GM12878 (cell line): ENCODE measurements at regions of chr4 and their contacts with region 1.

Region 1: GRCh38 chr4:10018818-10019461 is 2.4 kb downstream of the SLC2A9 start:
- DNase-seq: peak; percentile 64
- ATAC-seq: peak; percentile 97
- H3K4me3 ChIP-seq: peak overlapping the region; percentile 47
- H3K27ac ChIP-seq: peak overlapping the region; percentile 3; the same call in 1 of the 2 replicates
- H3K4me1 ChIP-seq: peaks cover 14% of the 10 kb centered on the region
- H3K27me3 ChIP-seq: no peaks in the 10 kb centered on the region; a peak in 1 of 4 replicates
- CTCF ChIP-seq: peak; percentile 98 to 100 (median 99); a peak in 5 of 6 replicates
- EP300 ChIP-seq: no peak
- POLR2A ChIP-seq: peak; percentile 83
- RAD21 ChIP-seq: peak; percentile 86

Region 2: DNA sequence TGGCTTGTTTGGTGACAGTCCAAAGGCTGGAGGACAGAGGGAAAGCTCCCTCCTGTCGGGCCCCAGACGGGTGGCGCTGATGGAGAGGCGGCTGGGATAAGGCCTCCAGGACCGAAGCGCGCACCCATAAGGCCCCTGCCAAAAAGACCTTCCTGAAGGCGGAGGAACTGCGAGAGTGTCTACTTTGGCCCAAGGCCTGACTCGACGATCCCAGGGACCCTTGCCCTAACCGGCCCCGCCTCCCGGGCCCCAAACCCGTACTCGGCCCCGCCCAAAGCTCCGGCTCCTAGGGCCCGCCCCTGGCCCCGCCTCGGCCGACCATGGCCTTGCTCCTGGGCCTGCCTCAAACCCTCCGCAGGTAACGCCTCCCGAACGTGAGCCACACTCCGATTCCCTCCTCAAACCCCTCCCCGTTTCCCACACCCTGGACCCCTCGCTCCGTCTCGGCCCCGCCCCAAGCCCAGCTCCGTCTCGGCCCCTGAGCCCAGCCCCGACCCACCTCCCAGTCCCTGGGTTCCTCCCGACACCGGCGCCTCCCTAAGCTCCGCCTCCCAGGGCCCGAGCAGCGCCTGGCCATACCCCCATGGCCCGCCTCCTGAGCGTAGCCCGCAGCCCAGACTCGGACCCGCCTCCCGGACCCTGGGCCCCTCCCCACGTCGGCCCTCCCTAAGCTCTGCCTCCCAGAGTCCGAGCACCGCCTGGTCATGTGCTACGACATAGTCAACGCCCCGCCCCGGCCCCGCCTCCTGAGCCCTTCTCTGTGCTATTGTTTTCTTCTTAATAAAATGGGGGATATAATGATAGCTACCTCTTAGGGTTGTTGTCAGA is 327.5 kb before region 1 on chr4:
- CTCF ChIA-PET with region 1: interaction called, 9 read pairs
- POLR2A ChIA-PET with region 1: no interaction called
- RAD21 ChIA-PET with region 1: interaction called, 3 read pairs
- SMC1A ChIA-PET with region 1: no interaction called
- in situ Hi-C with region 1: loop called (anchors 10 kb)
- intact Hi-C with region 1: no loop called
- DNase-seq: peak; percentile 25
- ATAC-seq: peak; percentile 100
- H3K4me3 ChIP-seq: no peak overlapping the region
- H3K27ac ChIP-seq: no peak overlapping the region
- H3K4me1 ChIP-seq: no peaks in the 10 kb centered on the region
- H3K27me3 ChIP-seq: no peaks in the 10 kb centered on the region; a peak in 1 of 4 replicates
- CTCF ChIP-seq: no peak
- EP300 ChIP-seq: no peak
- POLR2A ChIP-seq: no peak
- RAD21 ChIP-seq: no peak

Region 3: DNA sequence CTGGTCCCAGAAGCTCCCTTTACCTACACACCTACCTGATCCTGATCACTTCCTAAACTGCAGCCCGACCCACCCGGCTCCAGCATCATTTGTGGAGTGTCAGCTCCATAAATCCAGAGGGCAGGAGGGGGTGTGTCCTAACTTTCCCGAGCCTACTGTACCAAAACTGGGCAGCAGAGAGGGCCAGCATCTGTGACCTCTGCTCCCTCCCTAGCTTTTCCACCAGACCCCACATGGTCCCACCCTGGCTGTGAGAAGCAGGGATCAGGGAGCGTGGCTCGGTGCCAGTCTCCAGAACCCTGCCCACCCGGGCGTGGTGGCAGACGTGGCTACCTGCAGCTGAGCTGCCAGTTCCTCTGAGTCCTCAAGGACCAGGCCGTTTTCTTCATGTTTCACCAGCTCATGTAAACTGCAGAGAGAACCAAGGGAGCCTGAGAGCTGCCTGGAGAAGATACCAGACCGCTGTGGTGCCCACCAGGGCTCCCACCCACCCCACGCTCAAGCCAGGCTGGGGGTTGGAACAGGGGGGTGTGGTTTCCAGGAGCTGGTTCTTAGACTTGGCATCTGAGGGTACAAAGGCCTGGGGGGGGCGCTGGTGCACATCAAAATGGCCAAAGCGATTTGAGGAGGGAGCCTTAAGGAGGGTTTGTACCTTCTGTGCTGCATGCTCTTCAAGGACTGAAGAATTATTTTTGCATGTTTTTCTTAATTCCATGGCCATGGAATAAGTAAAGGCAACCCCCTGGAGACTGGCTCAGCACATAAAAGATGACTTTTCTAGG is 314.2 kb before region 1 on chr4:
- CTCF ChIA-PET with region 1: interaction called, 114 read pairs
- POLR2A ChIA-PET with region 1: no interaction called
- RAD21 ChIA-PET with region 1: interaction called, 33 read pairs
- SMC1A ChIA-PET with region 1: interaction called, 27 read pairs
- in situ Hi-C with region 1: loop called (anchors 10 kb)
- intact Hi-C with region 1: loop called (anchors 1 kb)
- DNase-seq: no peak
- ATAC-seq: no peak
- H3K4me3 ChIP-seq: no peak overlapping the region
- H3K27ac ChIP-seq: no peak overlapping the region
- H3K4me1 ChIP-seq: no peaks in the 10 kb centered on the region
- H3K27me3 ChIP-seq: no peaks in the 10 kb centered on the region
- CTCF ChIP-seq: 0 out of 6 replicates have a peak, but pooled peaks of 1 of the 3 experiments have one; percentile 5
- EP300 ChIP-seq: no peak
- POLR2A ChIP-seq: no peak
- RAD21 ChIP-seq: no peak

Region 4: DNA sequence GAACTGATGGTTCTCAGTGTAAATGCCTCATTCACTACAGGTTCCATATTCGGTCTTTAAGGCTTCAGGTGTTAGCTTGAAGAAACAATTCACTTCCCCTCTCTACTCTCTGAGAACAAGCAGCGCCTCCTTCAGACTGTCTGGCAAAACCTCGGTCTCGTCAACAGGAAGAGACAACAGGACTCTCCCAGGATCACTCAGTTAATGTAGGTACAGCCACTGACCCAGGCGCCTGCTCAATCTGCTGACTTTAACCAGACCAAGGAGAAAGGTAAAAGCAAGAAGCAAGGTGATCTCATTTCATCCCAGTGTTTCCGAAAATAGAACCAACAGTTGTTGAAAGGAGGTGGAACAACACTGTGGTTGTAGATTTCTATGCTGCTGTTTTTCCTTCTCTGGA is 99.9 kb before region 1 on chr4:
- CTCF ChIA-PET with region 1: interaction called, 37 read pairs
- POLR2A ChIA-PET with region 1: interaction called, 3 read pairs
- RAD21 ChIA-PET with region 1: interaction called, 22 read pairs
- SMC1A ChIA-PET with region 1: interaction called, 18 read pairs
- in situ Hi-C with region 1: no loop called
- intact Hi-C with region 1: loop called (anchors 5 kb)
- DNase-seq: no peak
- ATAC-seq: no peak
- H3K4me3 ChIP-seq: no peak overlapping the region
- H3K27ac ChIP-seq: no peak overlapping the region
- H3K4me1 ChIP-seq: no peaks in the 10 kb centered on the region
- H3K27me3 ChIP-seq: no peaks in the 10 kb centered on the region
- CTCF ChIP-seq: no peak
- EP300 ChIP-seq: no peak
- POLR2A ChIP-seq: no peak
- RAD21 ChIP-seq: no peak

Region 5: GRCh38 chr4:10054571-10055041 is 35.7 kb after region 1 on chr4:
- CTCF ChIA-PET with region 1: no interaction called
- POLR2A ChIA-PET with region 1: no interaction called
- RAD21 ChIA-PET with region 1: no interaction called
- SMC1A ChIA-PET with region 1: no interaction called
- in situ Hi-C with region 1: no loop called
- intact Hi-C with region 1: no loop called
- DNase-seq: no peak
- ATAC-seq: no peak
- H3K4me3 ChIP-seq: no peak overlapping the region
- H3K27ac ChIP-seq: no peak overlapping the region
- H3K4me1 ChIP-seq: no peaks in the 10 kb centered on the region
- H3K27me3 ChIP-seq: no peaks in the 10 kb centered on the region
- CTCF ChIP-seq: no peak
- EP300 ChIP-seq: no peak
- POLR2A ChIP-seq: no peak
- RAD21 ChIP-seq: no peak

Region 6: DNA sequence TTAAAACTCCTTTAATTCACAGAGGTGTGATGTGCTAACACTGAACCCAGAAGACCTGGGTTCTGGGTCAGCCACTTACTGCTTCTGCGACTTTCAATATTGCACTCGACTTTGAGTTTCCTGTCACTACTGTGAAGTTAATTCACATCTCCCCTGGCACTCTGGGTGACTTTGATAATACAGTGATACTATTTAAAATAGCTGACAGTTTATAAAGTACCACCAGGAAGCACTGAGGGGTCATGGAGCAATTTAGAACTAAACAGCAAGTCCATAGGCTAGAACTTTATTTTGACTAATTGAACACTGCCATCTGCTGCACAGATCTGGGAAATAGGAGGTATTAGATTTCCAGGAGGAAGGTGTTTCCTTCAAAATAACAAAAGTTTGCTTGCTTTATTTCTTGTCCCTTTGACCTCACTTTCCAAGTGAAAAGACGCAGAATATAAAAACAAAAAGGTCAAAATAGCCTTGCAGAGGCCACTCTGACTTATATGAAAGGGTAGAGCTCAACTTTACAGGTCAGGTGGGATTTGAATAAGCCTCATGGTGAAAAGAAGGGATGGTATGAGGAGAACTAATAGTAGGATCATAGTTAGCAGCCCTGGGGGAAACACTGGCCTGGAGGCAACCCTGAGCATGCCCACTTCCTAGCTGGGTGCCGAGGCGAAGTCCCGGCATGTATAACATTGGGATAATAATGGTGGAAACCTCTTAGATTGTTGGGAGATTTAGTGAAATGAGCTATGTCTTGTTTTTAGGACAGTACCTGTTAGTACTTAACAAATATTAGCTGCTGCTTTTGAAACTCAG is 384.9 kb after region 1 on chr4:
- CTCF ChIA-PET with region 1: interaction called, 5 read pairs
- POLR2A ChIA-PET with region 1: no interaction called
- RAD21 ChIA-PET with region 1: no interaction called
- SMC1A ChIA-PET with region 1: interaction called, 3 read pairs
- in situ Hi-C with region 1: no loop called
- intact Hi-C with region 1: loop called (anchors 2 kb)
- DNase-seq: no peak
- ATAC-seq: peak; percentile 48; the same call in 1 of the 3 replicates
- H3K4me3 ChIP-seq: no peak overlapping the region
- H3K27ac ChIP-seq: no peak overlapping the region
- H3K4me1 ChIP-seq: no peaks in the 10 kb centered on the region
- H3K27me3 ChIP-seq: no peaks in the 10 kb centered on the region
- CTCF ChIP-seq: peak in 2 of 3 experiments; percentile 38 to 46; a peak in 3 of 6 replicates
- EP300 ChIP-seq: no peak
- POLR2A ChIP-seq: no peak
- RAD21 ChIP-seq: peak; percentile 64